PC-9 (cell line): ENCODE measurements at regions of chr22 and their contacts with region 1.

Region 1: GRCh38 chr22:27228771-27229170 is 571.4 kb downstream of the MIAT start:
- DNase-seq: no peak
- H3K4me3 ChIP-seq: no peak overlapping the region
- H3K27ac ChIP-seq: no peak overlapping the region
- H3K4me1 ChIP-seq: peaks cover 5% of the 10 kb centered on the region; the same call in 1 of the 2 replicates
- H3K27me3 ChIP-seq: no peaks in the 10 kb centered on the region
- CTCF ChIP-seq: no peak

Region 2: DNA sequence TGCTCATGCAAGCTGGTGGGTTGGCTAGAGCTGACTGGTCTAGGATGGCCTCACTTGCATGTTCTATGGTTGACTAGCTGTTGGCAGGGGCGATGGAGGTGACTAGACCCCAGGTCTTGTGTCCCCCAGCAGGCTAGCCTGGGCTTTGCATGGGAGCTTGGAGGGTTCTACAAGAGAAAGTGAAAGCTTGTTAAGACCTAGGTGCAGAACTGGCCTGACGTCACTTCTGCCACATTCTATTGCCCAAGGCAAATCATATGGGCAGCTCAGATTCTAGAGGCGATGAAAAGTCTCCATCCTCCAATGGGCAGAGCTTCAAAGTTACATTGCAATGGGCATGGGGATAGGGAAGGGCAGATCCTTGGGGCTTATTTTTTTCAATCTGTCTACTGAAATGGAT is 400.5 kb before region 1 on chr22:
- CTCF ChIA-PET with region 1: no interaction called
- POLR2A ChIA-PET with region 1: interaction called, 13 read pairs
- intact Hi-C with region 1: no loop called
- DNase-seq: no peak
- H3K4me3 ChIP-seq: no peak overlapping the region
- H3K27ac ChIP-seq: no peak overlapping the region
- H3K4me1 ChIP-seq: no peaks in the 10 kb centered on the region
- H3K27me3 ChIP-seq: no peaks in the 10 kb centered on the region
- CTCF ChIP-seq: no peak

Region 3: GRCh38 chr22:27780161-27780575 is 551.4 kb after region 1 on chr22:
- CTCF ChIA-PET with region 1: no interaction called
- POLR2A ChIA-PET with region 1: no interaction called
- intact Hi-C with region 1: no loop called
- DNase-seq: no peak
- H3K4me3 ChIP-seq: no peak overlapping the region
- H3K27ac ChIP-seq: no peak overlapping the region
- H3K4me1 ChIP-seq: no peaks in the 10 kb centered on the region
- H3K27me3 ChIP-seq: no peaks in the 10 kb centered on the region
- CTCF ChIP-seq: no peak